Gastrocnemius medialis (tissue), 4 donors: ENCODE measurements at regions of chr20 and their contacts with region 1.

Region 1: DNA sequence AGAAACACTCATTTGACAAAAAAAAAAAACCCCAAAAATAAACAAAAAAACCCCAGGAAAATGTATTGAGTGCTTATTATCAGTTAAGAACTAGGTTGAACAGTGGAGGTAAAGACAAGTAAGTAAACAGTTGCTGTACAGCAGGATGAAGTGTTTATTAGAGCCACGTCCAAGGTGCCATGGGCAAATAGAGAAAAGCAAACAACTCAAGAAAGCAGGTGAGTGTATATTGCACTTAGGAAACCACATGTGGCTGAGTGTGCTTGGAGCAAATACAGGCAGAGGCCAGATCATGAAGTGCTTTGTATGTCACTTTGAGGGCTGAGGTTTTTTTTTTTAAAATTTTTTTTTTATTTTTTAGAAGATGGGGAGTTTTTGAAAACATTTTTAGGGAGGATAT is 98.3 kb downstream of the MACROD2 start:
- DNase-seq: no peak
- ATAC-seq: no peak
- H3K4me3 ChIP-seq: no peak overlapping the region
- H3K27ac ChIP-seq: no peak overlapping the region
- H3K4me1 ChIP-seq: no peaks in the 10 kb centered on the region
- H3K27me3 ChIP-seq: no peaks in the 10 kb centered on the region
- CTCF ChIP-seq: no peak
- POLR2A ChIP-seq: no peak

Region 2: DNA sequence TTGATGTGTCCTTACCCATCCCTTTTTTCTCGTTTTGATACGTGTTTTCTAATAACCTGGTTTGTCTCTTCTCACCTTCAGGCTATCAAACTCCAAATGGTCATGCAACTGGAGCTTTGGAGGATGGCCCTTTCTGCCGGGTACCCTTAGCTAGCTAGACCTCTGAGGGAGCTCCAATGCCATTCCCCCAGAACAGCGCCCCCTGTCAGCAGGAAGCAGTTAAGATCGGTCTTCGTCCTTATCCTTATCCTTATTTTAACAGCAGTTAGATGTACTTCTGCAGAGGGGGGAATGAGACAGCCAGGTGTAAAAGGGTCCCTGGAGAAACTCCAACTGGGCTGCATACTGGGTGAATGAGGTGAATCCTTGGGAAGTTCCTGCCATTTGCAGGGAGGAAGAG is 140.4 kb before region 1 on chr20:
- in situ Hi-C with region 1: no loop called
- intact Hi-C with region 1: no loop called
- DNase-seq: no peak
- ATAC-seq: no peak
- H3K4me3 ChIP-seq: no peak overlapping the region
- H3K27ac ChIP-seq: no peak overlapping the region
- H3K4me1 ChIP-seq: no peaks in the 10 kb centered on the region
- H3K27me3 ChIP-seq: no peaks in the 10 kb centered on the region
- CTCF ChIP-seq: no peak
- POLR2A ChIP-seq: no peak

Region 3: GRCh38 chr20:14189794-14190402 is 96.2 kb after region 1 on chr20:
- in situ Hi-C with region 1: loop called in 1 of 4 experiments (anchors 25 kb)
- intact Hi-C with region 1: no loop called
- DNase-seq: no peak
- ATAC-seq: no peak
- H3K4me3 ChIP-seq: no peak overlapping the region
- H3K27ac ChIP-seq: no peak overlapping the region
- H3K4me1 ChIP-seq: no peaks in the 10 kb centered on the region
- H3K27me3 ChIP-seq: no peaks in the 10 kb centered on the region
- CTCF ChIP-seq: no peak
- POLR2A ChIP-seq: no peak